ENCODE measurements at regions of chr2 and their contacts with region 1.

Region 1: GRCh38 chr2:75676464-75676863 is 29.9 kb downstream of the MRPL19 start:
- DNase-seq: no peak
- H3K4me3 ChIP-seq: no peak overlapping the region
- CTCF ChIP-seq: no peak

Region 2: DNA sequence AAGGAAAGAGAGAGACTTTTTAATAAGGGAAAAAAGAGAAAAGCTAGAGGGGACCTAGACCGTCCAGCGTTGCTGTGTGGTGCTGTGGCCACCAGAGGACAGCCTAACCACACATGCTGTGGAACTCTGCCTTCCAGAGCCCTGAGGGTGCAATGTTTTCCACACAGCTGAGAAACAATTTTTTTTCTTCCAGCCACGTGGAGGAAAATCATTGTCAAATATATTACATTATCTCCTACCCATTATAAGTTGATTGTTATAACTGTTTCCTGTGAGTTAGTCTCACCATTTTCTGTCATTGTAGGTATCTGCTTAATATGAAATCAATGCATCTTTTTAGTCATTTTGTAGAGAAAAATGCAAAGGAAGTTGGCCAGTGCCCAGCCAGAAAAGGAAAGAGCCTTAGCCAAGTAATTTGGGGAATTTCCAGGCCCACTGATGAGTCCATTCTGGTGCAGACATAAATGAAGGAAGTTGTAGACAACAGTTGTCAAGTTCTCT is 35.8 kb before region 1 on chr2:
- CTCF ChIA-PET with region 1: interaction called, 120 read pairs
- POLR2A ChIA-PET with region 1: no interaction called
- DNase-seq: no peak
- H3K4me3 ChIP-seq: no peak overlapping the region
- CTCF ChIP-seq: peak; percentile 97

Region 3: GRCh38 chr2:75646583-75647425 is 29.7 kb before region 1 on chr2 and contains the start of gene MRPL19:
- CTCF ChIA-PET with region 1: interaction called, 120 read pairs
- POLR2A ChIA-PET with region 1: no interaction called
- DNase-seq: peak; percentile 60
- H3K4me3 ChIP-seq: peak within 1 kb of the TSS; percentile 95
- CTCF ChIP-seq: no peak

Region 4: DNA sequence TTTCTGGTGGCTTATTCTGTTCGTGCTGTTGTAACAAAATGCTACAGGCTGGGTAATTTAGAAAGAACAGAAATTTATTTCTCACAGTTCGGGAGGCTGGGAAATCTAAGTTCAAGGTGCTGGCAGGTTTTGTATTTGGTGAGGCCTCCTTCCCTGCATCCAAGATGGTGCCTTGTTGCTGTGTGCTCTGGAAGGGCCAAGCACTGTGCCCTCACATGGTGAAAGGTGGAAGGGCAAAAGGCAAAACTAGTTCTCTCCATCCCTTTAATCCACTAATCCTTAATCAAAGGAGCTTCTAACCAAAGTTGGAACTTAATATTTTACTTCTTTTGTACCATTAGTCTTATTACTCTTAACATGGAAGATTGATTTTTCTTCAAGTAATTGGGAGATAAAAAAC is 22.5 kb before region 1 on chr2:
- CTCF ChIA-PET with region 1: interaction called, 21 read pairs
- POLR2A ChIA-PET with region 1: no interaction called
- DNase-seq: no peak
- H3K4me3 ChIP-seq: no peak overlapping the region
- CTCF ChIP-seq: no peak

Region 5: DNA sequence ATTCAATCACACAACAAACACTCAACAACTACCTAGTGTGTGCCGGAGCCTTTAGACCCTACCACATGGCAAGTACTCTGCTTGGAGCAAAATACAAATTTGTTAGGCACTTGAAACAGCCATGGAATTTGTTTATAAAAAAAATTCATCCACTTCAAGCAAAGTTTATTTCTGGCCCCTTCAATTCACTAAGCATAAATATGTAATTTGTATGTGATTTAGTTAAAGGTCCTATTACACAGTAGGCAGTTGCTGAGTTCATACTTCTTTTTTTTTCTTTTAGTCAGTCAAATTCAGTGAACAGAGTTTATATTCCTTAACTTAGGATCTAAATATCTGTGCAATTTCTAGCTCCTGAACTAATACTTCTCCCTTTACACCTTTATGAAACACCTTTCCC is 11.7 kb after region 1 on chr2:
- CTCF ChIA-PET with region 1: interaction called, 54 read pairs
- POLR2A ChIA-PET with region 1: no interaction called
- DNase-seq: no peak
- H3K4me3 ChIP-seq: no peak overlapping the region
- CTCF ChIP-seq: no peak